Left ventricle myocardium inferior (tissue), 1 donor: ENCODE measurements at regions of chr9 and their contacts with region 1.

Region 1: GRCh38 chr9:134171316-134172197 is 7.2 kb upstream of the RNU6ATAC start:
- DNase-seq: no peak
- H3K4me3 ChIP-seq: no peak overlapping the region
- H3K27ac ChIP-seq: no peak overlapping the region
- H3K4me1 ChIP-seq: peaks cover 40% of the 10 kb centered on the region
- H3K27me3 ChIP-seq: peaks cover 28% of the 10 kb centered on the region
- CTCF ChIP-seq: no peak

Region 2: DNA sequence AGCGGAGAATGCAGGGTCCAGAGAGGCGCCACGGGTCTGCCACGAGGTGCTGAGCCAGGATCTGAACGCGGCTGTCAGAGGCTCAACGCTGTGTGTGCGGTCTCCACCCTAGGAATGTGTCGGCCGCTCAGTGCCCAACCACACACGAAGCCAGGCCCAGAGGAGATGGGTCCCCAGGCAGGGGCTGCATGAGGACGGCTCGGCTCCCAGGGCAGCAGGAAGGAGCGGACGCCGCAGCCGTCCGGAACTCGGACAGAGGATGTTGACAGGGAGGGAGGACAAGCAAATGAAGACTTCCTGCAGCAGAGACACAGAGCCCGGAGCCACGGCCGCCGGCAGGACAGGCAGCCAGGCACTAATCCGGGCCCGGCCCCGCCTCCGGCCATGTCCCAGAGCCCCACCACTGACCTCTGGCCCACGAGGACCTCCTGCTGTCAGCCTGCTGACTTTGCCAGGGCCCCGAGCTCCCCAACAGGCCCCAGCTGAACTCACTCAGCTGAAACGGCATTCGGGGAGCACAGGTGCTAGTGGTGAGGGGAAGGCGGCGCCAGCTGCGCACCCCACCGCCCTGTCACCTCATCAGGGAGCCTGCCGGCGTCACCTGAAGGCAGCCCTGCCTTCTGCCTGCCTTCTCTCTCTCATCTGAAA is 192.2 kb before region 1 on chr9:
- intact Hi-C with region 1: no loop called
- DNase-seq: peak; percentile 62
- H3K4me3 ChIP-seq: peak overlapping the region; percentile 56
- H3K27ac ChIP-seq: peak overlapping the region; percentile 56
- H3K4me1 ChIP-seq: peaks cover 31% of the 10 kb centered on the region
- H3K27me3 ChIP-seq: no peaks in the 10 kb centered on the region
- CTCF ChIP-seq: no peak

Region 3: GRCh38 chr9:134443168-134444037 is 271.8 kb after region 1 on chr9:
- intact Hi-C with region 1: loop called (anchors 2 kb)
- DNase-seq: peak; percentile 82
- H3K4me3 ChIP-seq: no peak overlapping the region
- H3K27ac ChIP-seq: peak overlapping the region; percentile 20
- H3K4me1 ChIP-seq: peaks cover 54% of the 10 kb centered on the region
- H3K27me3 ChIP-seq: peaks cover 5% of the 10 kb centered on the region
- CTCF ChIP-seq: peak; percentile 99